GM10248 (cell line): ENCODE measurements at regions of chr1 and their contacts with region 1.

Region 1: GRCh38 chr1:207711285-207711684 is 40.6 kb upstream of the CD46 start:
- DNase-seq: no peak
- CTCF ChIP-seq: no peak

Region 2: DNA sequence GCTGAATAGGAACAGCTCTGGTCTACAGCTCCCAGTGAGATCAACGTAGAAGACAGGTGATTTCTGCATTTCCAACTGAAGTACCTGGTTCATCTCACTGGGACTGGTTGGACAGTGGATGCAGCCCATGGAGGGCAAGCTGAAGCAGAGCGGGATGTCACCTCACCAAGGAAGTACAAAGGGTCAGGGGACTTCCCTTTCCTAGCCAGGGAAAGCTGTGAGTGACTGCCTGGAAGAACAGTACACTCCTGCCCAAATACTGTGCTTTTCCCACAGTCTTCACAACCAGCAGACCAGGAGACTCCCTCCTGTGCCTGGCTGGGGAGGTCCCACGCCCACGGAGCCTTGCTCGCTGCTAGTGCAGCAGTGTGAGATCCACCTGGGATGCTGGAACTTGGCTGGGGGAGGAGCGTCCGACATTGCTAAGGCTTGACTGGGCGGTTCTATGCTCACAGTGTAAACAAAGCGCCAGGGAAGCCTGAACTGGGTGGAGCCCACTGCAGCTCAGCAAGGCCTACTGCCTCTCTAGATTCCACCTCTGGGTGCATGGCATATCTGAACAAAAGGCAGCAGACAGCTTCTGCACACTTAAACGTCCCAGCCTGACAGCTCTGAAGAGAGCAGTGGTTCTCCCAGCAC is 51.6 kb before region 1 on chr1:
- CTCF ChIA-PET with region 1: no interaction called
- POLR2A ChIA-PET with region 1: no interaction called
- DNase-seq: no peak
- CTCF ChIP-seq: no peak

Region 3: DNA sequence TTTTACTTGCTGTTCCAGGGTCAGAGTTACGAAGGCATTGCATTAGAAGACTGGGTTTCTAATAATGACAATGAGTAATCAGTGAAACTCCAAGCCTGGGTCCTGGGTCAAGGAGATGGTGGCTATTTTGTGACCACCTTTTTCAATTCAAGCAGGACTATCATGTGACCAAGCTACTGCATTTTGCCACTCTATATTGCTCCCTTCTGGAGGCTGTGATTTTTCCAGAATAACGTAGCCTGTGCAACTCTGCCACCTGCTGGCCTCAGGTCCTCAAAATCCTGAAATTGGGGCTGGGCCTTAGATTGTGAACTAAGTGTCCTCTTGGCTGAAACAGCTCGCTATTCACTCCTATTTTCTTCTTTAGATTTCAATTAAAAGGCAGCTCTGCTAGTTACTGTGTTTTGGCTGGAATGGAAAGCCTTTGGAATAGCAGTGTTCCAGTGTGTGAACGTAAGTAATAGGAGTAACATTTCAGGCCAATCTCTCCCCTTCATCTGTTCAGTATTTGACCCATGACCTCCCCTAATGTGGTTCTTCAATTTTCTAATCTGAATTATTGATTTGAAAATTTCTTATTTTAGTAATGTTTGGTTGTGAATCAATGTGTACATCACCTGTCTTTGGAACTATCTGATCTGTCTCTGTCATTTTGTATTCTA is 12.3 kb before region 1 on chr1:
- CTCF ChIA-PET with region 1: interaction called, 11 read pairs
- POLR2A ChIA-PET with region 1: no interaction called
- DNase-seq: no peak
- CTCF ChIP-seq: peak; percentile 82